ENCODE measurements at regions of chr5 and their contacts with region 1.

Region 1: GRCh38 chr5:138178516-138179276 is at the starts of genes BRD8 and KIF20A:
- DNase-seq: peak; percentile 96 to 97
- ATAC-seq: peak; percentile 92 to 94
- H3K4me3 ChIP-seq: peak within 1 kb of the TSS; percentile 80
- H3K27ac ChIP-seq: peak within 1 kb of the TSS; percentile 76 to 92
- H3K4me1 ChIP-seq: peaks cover 15% of the 10 kb centered on the region
- CTCF ChIP-seq: no peak
- EP300 ChIP-seq: no peak
- POLR2A ChIP-seq: peak; percentile 80
- RAD21 ChIP-seq: no peak
- polyA plus RNA-seq, gene BRD8: 82.3 and 85.8 TPM in 2 replicates
- polyA plus RNA-seq, gene KIF20A: 37.4 and 42.2 TPM in 2 replicates

Region 2: GRCh38 chr5:137914758-137915157 is 263.9 kb before region 1 on chr5:
- CTCF ChIA-PET with region 1: no interaction called
- POLR2A ChIA-PET with region 1: no interaction called
- DNase-seq: no peak
- ATAC-seq: no peak
- H3K4me3 ChIP-seq: no peak overlapping the region
- H3K27ac ChIP-seq: no peak overlapping the region
- H3K4me1 ChIP-seq: no peaks in the 10 kb centered on the region
- CTCF ChIP-seq: no peak
- EP300 ChIP-seq: no peak
- POLR2A ChIP-seq: no peak
- RAD21 ChIP-seq: no peak

Region 3: DNA sequence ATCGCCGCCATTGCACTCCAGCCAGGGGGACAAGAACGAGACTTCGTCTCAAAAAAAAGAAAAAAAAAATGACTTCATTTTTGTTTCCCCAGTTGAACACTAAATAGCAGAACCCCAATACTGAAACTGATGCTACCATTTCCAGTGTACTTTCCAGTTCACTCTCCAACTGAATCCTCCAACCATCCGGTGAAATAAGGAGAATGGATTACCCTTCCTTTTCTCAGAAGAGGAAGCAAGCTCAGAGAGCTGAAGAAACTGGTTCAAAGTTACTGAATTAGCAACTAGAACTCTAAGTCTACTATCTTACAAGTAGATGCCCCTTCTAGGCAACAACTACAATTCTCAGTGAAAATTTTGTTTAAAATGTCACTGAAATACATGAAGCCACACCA is 149.7 kb before region 1 on chr5:
- CTCF ChIA-PET with region 1: no interaction called
- POLR2A ChIA-PET with region 1: no interaction called
- DNase-seq: no peak
- ATAC-seq: no peak
- H3K4me3 ChIP-seq: no peak overlapping the region
- H3K27ac ChIP-seq: no peak overlapping the region
- H3K4me1 ChIP-seq: peaks cover 40% of the 10 kb centered on the region
- CTCF ChIP-seq: no peak
- EP300 ChIP-seq: no peak
- POLR2A ChIP-seq: no peak
- RAD21 ChIP-seq: no peak

Region 4: DNA sequence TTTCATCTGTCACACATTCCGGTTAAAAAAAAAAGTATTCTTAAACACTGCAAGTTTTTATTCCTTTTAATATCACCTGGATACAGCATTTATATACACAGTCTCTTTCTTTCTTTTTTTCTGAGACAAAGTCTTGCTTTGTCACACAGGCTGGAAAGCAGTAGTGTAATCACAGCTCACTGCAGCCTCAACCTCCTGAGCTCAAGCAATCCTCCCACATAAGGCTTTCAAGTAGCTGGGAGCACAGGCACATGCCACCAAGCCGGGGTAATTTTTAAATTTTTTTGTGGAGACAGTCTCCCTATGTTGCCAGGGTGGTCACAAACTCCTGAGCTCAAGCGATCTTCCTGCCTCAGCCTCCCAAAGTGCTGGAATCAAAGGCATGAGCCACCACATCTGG is 14.1 kb after region 1 on chr5:
- CTCF ChIA-PET with region 1: interaction called, 23 read pairs
- POLR2A ChIA-PET with region 1: no interaction called
- DNase-seq: no peak
- ATAC-seq: no peak
- H3K4me3 ChIP-seq: no peak overlapping the region
- H3K27ac ChIP-seq: no peak overlapping the region
- H3K4me1 ChIP-seq: no peaks in the 10 kb centered on the region
- CTCF ChIP-seq: no peak
- EP300 ChIP-seq: no peak
- POLR2A ChIP-seq: no peak
- RAD21 ChIP-seq: no peak

Region 5: DNA sequence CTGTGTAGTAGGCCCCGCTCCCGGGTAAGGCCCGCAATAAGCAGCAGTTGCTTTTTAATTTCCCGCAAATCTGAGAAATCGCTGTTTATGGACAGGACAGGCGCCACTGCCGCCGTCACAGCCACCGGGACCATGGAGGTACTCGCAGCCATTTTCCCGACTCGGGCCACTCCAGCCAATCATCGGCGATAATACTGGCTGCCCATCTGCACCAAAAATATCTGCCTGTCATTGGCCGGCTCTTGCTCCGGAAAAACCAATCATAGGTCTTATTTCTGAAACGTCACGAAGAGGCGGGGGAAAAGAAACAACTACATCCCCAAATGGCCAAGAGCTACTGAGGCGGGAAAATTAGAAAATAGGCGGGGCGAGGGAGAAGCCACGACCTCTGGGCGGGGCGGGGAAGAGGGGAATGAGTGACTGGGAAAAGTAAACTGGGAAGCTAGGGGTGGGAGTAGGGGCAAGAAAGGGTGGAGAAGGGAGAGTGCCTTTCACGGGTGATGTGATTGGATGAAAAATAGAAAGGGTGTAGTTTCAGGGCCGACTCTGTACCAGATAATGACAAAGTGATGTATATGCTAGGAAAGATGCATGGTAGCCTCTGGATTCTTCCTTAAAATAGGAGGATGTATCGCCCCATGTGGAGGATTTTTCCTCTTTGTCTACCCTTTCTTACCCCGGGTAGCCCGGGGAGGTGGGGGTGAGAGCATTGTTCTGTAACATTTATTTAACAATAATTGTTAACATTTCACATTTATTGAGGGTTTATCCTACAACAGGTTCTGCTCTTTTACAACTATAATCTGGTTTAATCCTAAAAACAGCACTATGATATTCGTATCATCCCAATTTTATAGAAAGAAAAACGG is 34.7 kb after region 1 on chr5 and contains the start of gene CDC23:
- CTCF ChIA-PET with region 1: interaction called, 3 read pairs
- POLR2A ChIA-PET with region 1: interaction called, 10 read pairs
- DNase-seq: peak; percentile 99 to 100
- ATAC-seq: peak; percentile 98 to 99
- H3K4me3 ChIP-seq: peak within 1 kb of the TSS; percentile 85
- H3K27ac ChIP-seq: peak within 1 kb of the TSS; percentile 80 to 91
- H3K4me1 ChIP-seq: peaks cover 6% of the 10 kb centered on the region; the same call in 2 of the 3 replicates
- CTCF ChIP-seq: no peak
- EP300 ChIP-seq: no peak
- POLR2A ChIP-seq: peak; percentile 60
- RAD21 ChIP-seq: no peak
- polyA plus RNA-seq, gene CDC23: 61.7 and 70.3 TPM in 2 replicates

Region 6: DNA sequence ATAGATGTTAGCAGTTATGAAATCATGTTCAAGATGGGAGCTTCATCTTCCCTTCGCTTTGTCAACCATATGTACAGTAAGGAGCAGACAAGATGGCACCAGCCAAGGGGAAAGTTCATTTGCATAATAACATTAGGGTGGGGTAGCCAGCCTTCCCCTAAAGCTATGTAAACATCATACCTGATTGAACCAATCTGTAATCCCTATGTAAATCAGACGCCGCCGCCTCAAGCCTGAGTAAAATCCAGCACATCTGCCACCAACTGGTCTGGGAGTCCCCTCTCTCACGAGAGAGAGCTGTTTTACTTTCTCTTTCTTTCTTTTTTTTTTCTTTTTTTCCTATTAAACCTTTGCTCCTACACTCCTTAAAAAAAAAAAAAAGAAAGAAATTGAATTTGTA is 229.3 kb after region 1 on chr5:
- CTCF ChIA-PET with region 1: interaction called, 20 read pairs
- POLR2A ChIA-PET with region 1: no interaction called
- DNase-seq: no peak
- ATAC-seq: no peak
- H3K4me3 ChIP-seq: no peak overlapping the region
- H3K27ac ChIP-seq: no peak overlapping the region
- H3K4me1 ChIP-seq: no peaks in the 10 kb centered on the region
- CTCF ChIP-seq: no peak
- EP300 ChIP-seq: no peak
- POLR2A ChIP-seq: no peak
- RAD21 ChIP-seq: no peak

Measured in A549 (cell line).